ENCODE measurements at regions of chr2 and their contacts with region 1.

Region 1: DNA sequence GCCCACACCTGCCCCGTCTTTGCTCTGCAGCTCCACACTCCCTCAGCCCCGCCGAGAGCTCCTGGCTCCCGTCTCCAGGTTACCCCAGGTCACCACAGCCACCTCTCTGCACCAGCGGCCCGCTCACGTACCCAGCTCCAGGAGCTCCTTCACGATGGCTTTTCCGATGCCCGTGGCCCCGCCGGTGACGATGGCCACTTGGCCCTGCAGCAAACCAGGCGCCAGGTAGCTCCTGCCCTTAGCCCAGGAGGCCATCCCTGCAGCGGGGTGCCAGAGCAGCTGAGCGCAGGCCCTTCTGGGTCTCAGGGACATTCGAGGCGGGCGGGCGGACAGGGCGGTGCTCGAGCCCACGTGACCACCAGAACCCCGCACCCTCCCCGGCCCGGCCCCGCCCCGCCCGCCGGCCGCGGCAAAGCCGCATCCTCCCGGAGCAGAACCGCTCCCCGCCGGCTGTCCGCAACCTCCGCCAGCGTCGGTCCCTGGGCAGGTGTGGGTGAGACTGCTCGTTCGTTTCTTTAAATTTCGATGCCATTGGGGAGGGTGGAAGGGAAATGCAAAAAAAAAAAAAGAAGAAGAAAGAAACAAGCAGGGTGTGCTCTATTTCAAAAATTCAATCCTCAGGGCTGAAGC is at the starts of genes PECR and TMEM169:
- DNase-seq: peak; percentile 85
- H3K4me3 Mint-ChIP-seq: peak within 1 kb of the TSS; percentile 96
- H3K27ac Mint-ChIP-seq: peak within 1 kb of the TSS; percentile 79
- H3K4me1 Mint-ChIP-seq: peaks cover 60% of the 10 kb centered on the region
- H3K27me3 Mint-ChIP-seq: no peaks in the 10 kb centered on the region
- total RNA-seq, gene PECR: 32.5 to 34.7 TPM
- total RNA-seq, gene TMEM169: 2.3 to 3.5 TPM

Region 2: DNA sequence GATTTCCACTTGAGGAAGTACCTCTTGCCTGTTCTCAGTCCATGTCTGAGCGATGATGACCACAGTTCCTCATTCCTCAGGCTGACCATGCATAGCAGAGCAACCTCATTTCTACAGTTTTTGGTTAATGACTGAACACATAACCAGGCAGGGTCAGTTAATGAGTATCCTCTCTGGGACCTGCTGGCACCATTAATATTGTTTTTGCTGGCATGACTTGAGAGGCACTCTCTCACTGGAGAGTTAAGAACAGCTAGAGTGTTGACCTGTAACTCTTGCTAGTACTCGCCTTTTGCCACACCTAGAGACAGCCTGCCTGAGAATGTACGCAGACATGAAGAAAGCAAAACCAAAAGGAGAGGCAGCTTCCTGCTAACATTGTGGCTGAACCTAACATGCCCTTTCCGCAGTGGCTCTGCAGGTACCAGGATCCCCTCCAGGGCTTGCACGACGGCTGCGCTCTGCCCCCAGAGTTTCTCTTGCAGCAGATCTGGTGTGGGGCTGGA is 23.9 kb before region 1 on chr2:
- CTCF ChIA-PET with region 1: interaction called, 11 read pairs
- POLR2A ChIA-PET with region 1: interaction called, 33 read pairs
- DNase-seq: peak; percentile 71
- H3K4me3 Mint-ChIP-seq: peak overlapping the region; percentile 64
- H3K27ac Mint-ChIP-seq: peak overlapping the region; percentile 95
- H3K4me1 Mint-ChIP-seq: peaks cover 41% of the 10 kb centered on the region
- H3K27me3 Mint-ChIP-seq: no peaks in the 10 kb centered on the region

Region 3: GRCh38 chr2:216114714-216115557 is 33.3 kb after region 1 on chr2:
- CTCF ChIA-PET with region 1: interaction called, 27 read pairs
- POLR2A ChIA-PET with region 1: interaction called, 103 read pairs
- DNase-seq: peak; percentile 98
- H3K4me3 Mint-ChIP-seq: peak overlapping the region; percentile 89
- H3K27ac Mint-ChIP-seq: peak overlapping the region; percentile 88
- H3K4me1 Mint-ChIP-seq: peaks cover 96% of the 10 kb centered on the region
- H3K27me3 Mint-ChIP-seq: no peaks in the 10 kb centered on the region

Region 4: DNA sequence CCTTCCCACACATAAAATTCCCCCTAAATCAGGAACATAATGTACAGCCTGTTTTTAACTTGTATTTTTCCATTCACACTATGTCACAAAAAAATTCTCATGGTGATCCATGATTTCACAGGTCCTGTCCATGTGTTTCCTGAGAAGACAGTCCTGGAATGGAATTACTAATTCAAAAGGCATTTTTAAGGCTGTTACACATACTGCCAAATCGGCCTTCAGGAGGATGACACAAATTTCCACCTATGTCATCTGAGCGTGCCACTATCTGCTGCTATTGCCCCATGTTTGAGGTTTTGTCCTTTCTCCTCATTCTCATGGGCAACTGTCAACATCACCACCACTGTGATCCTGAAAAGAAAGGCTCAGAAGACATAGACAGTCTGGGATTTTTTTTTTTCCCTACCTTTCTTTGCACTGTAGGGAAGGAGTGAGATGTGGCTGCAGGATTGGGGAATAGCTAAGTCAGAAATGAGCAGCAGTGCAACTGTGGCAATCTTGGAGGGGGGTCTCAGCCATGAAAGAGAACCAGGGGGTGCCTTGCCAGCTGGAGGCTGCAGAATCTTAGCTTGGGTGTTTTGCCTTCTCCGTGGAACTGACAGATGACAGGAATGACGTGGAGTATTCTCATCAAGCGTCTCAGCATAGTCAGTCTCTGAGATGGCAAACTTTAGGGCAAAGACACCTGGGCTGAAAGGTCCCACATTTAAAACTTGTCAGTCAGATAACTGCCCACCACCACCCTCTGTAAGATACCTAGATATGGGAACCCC is 217.3 kb after region 1 on chr2:
- CTCF ChIA-PET with region 1: no interaction called
- POLR2A ChIA-PET with region 1: no interaction called
- DNase-seq: no peak
- H3K4me3 Mint-ChIP-seq: no peak overlapping the region
- H3K27ac Mint-ChIP-seq: no peak overlapping the region
- H3K4me1 Mint-ChIP-seq: no peaks in the 10 kb centered on the region
- H3K27me3 Mint-ChIP-seq: peaks cover 2% of the 10 kb centered on the region